Posterior vena cava (tissue), 2 donors: ENCODE measurements at regions of chr4 and their contacts with region 1.

Region 1: GRCh38 chr4:102578819-102579218 is 77.7 kb downstream of the NFKB1 start:
- DNase-seq: no peak

Region 2: DNA sequence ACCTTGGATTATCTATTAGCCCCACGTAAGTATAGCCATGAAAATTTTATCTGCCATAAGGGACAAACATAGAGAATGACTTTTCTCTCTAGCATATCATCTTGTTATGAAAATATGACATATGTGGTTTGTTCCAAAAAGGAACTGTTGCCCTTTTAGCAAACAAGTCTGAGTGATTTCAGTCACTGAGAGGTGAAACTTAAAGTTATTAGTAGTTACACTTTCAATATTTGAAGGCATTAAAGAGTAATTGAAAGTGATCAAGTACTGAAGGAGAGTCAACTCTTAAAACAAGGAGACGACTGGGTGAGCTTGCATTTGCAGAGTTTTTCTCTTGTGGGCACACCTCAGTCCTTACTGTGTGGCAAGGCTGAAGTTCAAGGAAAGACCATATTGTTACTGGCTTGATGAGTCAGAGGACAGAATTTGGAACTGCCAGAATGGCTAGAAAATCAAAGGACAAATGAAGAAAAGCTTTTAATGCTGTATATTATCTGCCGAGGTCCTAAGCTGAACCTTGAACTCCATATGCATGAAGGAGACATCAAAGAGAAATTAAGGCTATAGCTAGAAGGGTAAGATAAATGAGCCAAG is 1855.9 kb before region 1 on chr4:
- intact Hi-C with region 1: no loop called
- DNase-seq: no peak

Region 3: GRCh38 chr4:102500696-102501446 is 77.9 kb before region 1 on chr4 and contains the start of gene NFKB1:
- intact Hi-C with region 1: loop called in 1 of 2 experiments (anchors 10 kb)
- DNase-seq: peak; percentile 91
- total RNA-seq, gene NFKB1: 31.4 to 35.7 TPM